Adrenal gland (tissue), 19 donors: ENCODE measurements at regions of chr7 and their contacts with region 1.

Region 1: DNA sequence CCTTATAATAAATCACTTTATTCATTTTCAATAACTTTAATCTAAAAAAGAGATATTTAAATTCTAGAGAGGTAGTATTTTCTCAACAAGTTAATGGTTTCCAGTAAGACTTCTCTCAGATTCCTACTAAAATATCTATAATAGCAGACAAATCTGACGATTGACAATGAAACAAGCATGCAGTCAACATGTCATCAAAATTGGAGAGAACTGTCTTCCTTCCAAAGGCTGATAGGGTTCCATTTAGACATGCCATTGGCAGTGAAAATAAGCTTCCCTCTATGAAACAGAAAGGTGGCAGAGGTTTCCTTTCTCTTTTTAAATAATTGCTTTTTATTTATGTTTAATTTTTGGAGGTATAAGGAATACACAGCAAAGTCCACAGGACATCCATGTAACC is 217.1 kb downstream of the POM121L12 start:
- DNase-seq: no peak
- H3K4me3 ChIP-seq: no peak overlapping the region
- H3K27ac ChIP-seq: no peak overlapping the region
- H3K4me1 ChIP-seq: no peaks in the 10 kb centered on the region
- H3K27me3 ChIP-seq: no peaks in the 10 kb centered on the region
- CTCF ChIP-seq: no peak
- POLR2A ChIP-seq: no peak

Region 2: GRCh38 chr7:53101006-53101405 is 151.5 kb before region 1 on chr7:
- intact Hi-C with region 1: no loop called
- DNase-seq: no peak
- H3K4me3 ChIP-seq: no peak overlapping the region
- H3K27ac ChIP-seq: no peak overlapping the region
- H3K4me1 ChIP-seq: no peaks in the 10 kb centered on the region
- H3K27me3 ChIP-seq: no peaks in the 10 kb centered on the region
- CTCF ChIP-seq: no peak
- POLR2A ChIP-seq: no peak

Region 3: GRCh38 chr7:53281305-53281704 is 28.8 kb after region 1 on chr7:
- intact Hi-C with region 1: loop called in 1 of 2 experiments (anchors 2 kb)
- DNase-seq: no peak
- H3K4me3 ChIP-seq: no peak overlapping the region
- H3K27ac ChIP-seq: no peak overlapping the region
- H3K4me1 ChIP-seq: no peaks in the 10 kb centered on the region
- H3K27me3 ChIP-seq: no peaks in the 10 kb centered on the region
- CTCF ChIP-seq: no peak
- POLR2A ChIP-seq: no peak